ENCODE measurements at regions of chr13 and their contacts with region 1.

Region 1: GRCh38 chr13:80363890-80364503 is 23.1 kb upstream of the SPRY2 start:
- DNase-seq: no peak
- ATAC-seq: peak; percentile 43 to 60
- H3K4me3 ChIP-seq: peak overlapping the region; percentile 29 to 38 (median 36)
- H3K27ac ChIP-seq: peak overlapping the region in 3 of 4 donors; percentile 26 to 40 (median 29)
- H3K4me1 ChIP-seq: peaks cover 9 to 13% of the 10 kb centered on the region in 2 donors
- H3K27me3 ChIP-seq: no peaks in the 10 kb centered on the region
- CTCF ChIP-seq: peak; percentile 46 to 87 (median 61)
- POLR2A ChIP-seq: no peak

Region 2: DNA sequence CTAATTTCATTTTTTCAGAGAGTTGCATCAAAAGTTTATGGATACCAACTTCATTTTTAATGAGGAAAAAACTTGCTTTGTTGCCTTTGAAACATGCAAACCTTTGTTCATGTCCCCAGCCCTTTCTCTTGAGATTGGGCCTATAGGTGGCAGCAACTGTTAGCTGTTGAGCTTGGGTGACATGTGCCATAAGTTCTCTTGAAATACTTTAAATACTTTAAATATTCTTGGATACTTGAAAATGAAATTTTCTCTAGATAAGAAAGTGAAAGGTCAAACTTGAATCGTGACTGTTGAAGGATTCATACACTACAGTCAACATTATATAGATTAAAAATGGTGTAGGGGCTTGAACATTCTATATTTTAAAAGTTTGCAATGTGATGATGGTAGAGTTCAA is 588.2 kb before region 1 on chr13:
- in situ Hi-C with region 1: loop called in 1 of 4 experiments (anchors 10 kb)
- intact Hi-C with region 1: loop called (anchors 5 kb)
- DNase-seq: no peak
- ATAC-seq: no peak
- H3K4me3 ChIP-seq: no peak overlapping the region
- H3K27ac ChIP-seq: no peak overlapping the region
- H3K4me1 ChIP-seq: peaks cover 0 to 4% of the 10 kb centered on the region in 2 donors
- H3K27me3 ChIP-seq: no peaks in the 10 kb centered on the region
- CTCF ChIP-seq: peak in 4 of 5 experiments; percentile 8 to 52 (median 40)
- POLR2A ChIP-seq: no peak

Region 3: GRCh38 chr13:80642641-80643040 is 278.6 kb after region 1 on chr13:
- in situ Hi-C with region 1: no loop called
- intact Hi-C with region 1: no loop called
- DNase-seq: no peak
- ATAC-seq: no peak
- H3K4me3 ChIP-seq: no peak overlapping the region
- H3K27ac ChIP-seq: no peak overlapping the region
- H3K4me1 ChIP-seq: no peaks in the 10 kb centered on the region
- H3K27me3 ChIP-seq: no peaks in the 10 kb centered on the region
- CTCF ChIP-seq: no peak
- POLR2A ChIP-seq: no peak